Activated B cell treated with CpG ODN at 0.5 μM for 24 hours (primary cell): ENCODE measurements at regions of chr6 and their contacts with region 1.

Region 1: GRCh38 chr6:2911171-2911570 is 8.1 kb upstream of the SERPINB9 start:
- DNase-seq: no peak
- ATAC-seq: peak; percentile 80
- H3K4me3 Mint-ChIP-seq: peak overlapping the region; percentile 51
- H3K27ac Mint-ChIP-seq: peak overlapping the region; percentile 88
- H3K4me1 Mint-ChIP-seq: peaks cover 43% of the 10 kb centered on the region
- H3K27me3 Mint-ChIP-seq: no peaks in the 10 kb centered on the region
- CTCF ChIP-seq: no peak

Region 2: GRCh38 chr6:2237001-2237400 is 674.2 kb before region 1 on chr6:
- CTCF ChIA-PET with region 1: no interaction called
- POLR2A ChIA-PET with region 1: no interaction called
- intact Hi-C with region 1: no loop called
- DNase-seq: no peak
- ATAC-seq: no peak
- H3K4me3 Mint-ChIP-seq: no peak overlapping the region
- H3K27ac Mint-ChIP-seq: no peak overlapping the region
- H3K4me1 Mint-ChIP-seq: peaks cover 15% of the 10 kb centered on the region
- H3K27me3 Mint-ChIP-seq: no peaks in the 10 kb centered on the region
- CTCF ChIP-seq: no peak

Region 3: GRCh38 chr6:2695454-2696095 is 215.6 kb before region 1 on chr6:
- CTCF ChIA-PET with region 1: no interaction called
- POLR2A ChIA-PET with region 1: no interaction called
- intact Hi-C with region 1: no loop called
- DNase-seq: no peak
- ATAC-seq: no peak
- H3K4me3 Mint-ChIP-seq: no peak overlapping the region
- H3K27ac Mint-ChIP-seq: no peak overlapping the region
- H3K4me1 Mint-ChIP-seq: no peaks in the 10 kb centered on the region
- H3K27me3 Mint-ChIP-seq: peaks cover 6% of the 10 kb centered on the region
- CTCF ChIP-seq: peak; percentile 28

Region 4: GRCh38 chr6:2791124-2791974 is 119.8 kb before region 1 on chr6:
- CTCF ChIA-PET with region 1: interaction called, 17 read pairs
- POLR2A ChIA-PET with region 1: interaction called, 6 read pairs
- intact Hi-C with region 1: loop called (anchors 1 kb)
- DNase-seq: no peak
- ATAC-seq: peak; percentile 91
- H3K4me3 Mint-ChIP-seq: peak overlapping the region; percentile 72
- H3K27ac Mint-ChIP-seq: peak overlapping the region; percentile 67
- H3K4me1 Mint-ChIP-seq: peaks cover 41% of the 10 kb centered on the region
- H3K27me3 Mint-ChIP-seq: no peaks in the 10 kb centered on the region
- CTCF ChIP-seq: no peak

Region 5: GRCh38 chr6:2876210-2877056 is 34.7 kb before region 1 on chr6:
- CTCF ChIA-PET with region 1: interaction called, 7 read pairs
- POLR2A ChIA-PET with region 1: interaction called, 8 read pairs
- intact Hi-C with region 1: loop called (anchors 2 kb)
- DNase-seq: no peak
- ATAC-seq: peak; percentile 23
- H3K4me3 Mint-ChIP-seq: peak overlapping the region; percentile 88
- H3K27ac Mint-ChIP-seq: peak overlapping the region; percentile 99
- H3K4me1 Mint-ChIP-seq: peaks cover 85% of the 10 kb centered on the region
- H3K27me3 Mint-ChIP-seq: no peaks in the 10 kb centered on the region
- CTCF ChIP-seq: no peak

Region 6: DNA sequence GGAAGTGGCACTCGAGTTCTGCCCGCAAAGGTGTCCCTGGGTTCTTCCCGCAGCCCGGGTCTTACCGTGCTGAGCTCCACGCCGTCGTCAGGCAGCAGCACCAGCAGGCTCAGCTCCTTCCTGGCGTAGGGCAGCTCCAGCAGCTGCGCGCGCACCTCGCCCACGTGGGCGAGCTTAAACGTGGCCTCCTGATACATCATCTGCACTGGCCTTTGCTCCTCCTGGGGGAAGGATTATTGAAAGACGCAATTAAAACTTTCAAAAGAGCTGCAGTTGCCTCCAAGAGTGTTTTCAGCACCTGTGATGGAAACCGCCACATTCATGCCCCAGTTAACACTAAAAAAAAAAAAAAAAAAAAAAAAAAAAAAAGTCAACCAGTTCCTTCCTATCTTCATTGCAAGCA is 19.4 kb before region 1 on chr6:
- CTCF ChIA-PET with region 1: interaction called, 6 read pairs
- POLR2A ChIA-PET with region 1: interaction called, 13 read pairs
- intact Hi-C with region 1: loop called (anchors 2 kb)
- DNase-seq: peak; percentile 58
- ATAC-seq: peak; percentile 84
- H3K4me3 Mint-ChIP-seq: peak overlapping the region; percentile 58
- H3K27ac Mint-ChIP-seq: peak overlapping the region; percentile 87
- H3K4me1 Mint-ChIP-seq: peaks cover 71% of the 10 kb centered on the region
- H3K27me3 Mint-ChIP-seq: no peaks in the 10 kb centered on the region
- CTCF ChIP-seq: no peak

Region 7: DNA sequence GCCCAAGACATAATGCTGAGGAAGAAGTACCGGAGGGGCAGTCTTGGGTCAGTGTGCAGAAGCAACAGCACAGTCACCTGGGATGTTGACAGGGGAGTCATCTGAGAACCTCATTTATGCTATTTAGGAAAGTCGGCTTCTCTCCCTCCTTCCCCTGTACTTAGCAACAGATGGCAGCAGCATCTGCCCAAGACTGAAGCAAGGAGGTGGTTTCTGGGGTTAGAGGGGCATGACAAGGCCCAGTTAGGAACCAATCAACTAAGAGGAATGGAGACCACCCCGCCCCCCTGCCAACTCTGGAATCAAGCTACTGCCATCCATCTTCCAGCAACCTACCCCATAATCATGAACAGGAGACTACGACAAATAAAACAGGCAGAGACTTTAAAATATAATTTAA is 178.8 kb after region 1 on chr6:
- CTCF ChIA-PET with region 1: no interaction called
- POLR2A ChIA-PET with region 1: no interaction called
- intact Hi-C with region 1: no loop called
- DNase-seq: no peak
- ATAC-seq: no peak
- H3K4me3 Mint-ChIP-seq: no peak overlapping the region
- H3K27ac Mint-ChIP-seq: no peak overlapping the region
- H3K4me1 Mint-ChIP-seq: no peaks in the 10 kb centered on the region
- H3K27me3 Mint-ChIP-seq: no peaks in the 10 kb centered on the region
- CTCF ChIP-seq: no peak